ENCODE measurements at regions of chr12 and their contacts with region 1.

Region 1: GRCh38 chr12:53476769-53477209 is 22.5 kb downstream of the MAP3K12 start:
- DNase-seq: no peak
- H3K4me3 ChIP-seq: no peak overlapping the region
- H3K27ac ChIP-seq: no peak overlapping the region
- H3K27me3 ChIP-seq: no peaks in the 10 kb centered on the region
- CTCF ChIP-seq: peak; percentile 47

Region 2: GRCh38 chr12:53441040-53441833 is 35.6 kb before region 1 on chr12 and contains the start of gene PRR13:
- CTCF ChIA-PET with region 1: interaction called, 7 read pairs
- POLR2A ChIA-PET with region 1: interaction called, 11 read pairs
- DNase-seq: peak; percentile 98
- H3K4me3 ChIP-seq: peak within 1 kb of the TSS; percentile 80
- H3K27ac ChIP-seq: peak within 1 kb of the TSS; percentile 88
- H3K27me3 ChIP-seq: no peaks in the 10 kb centered on the region
- CTCF ChIP-seq: no peak
- polyA plus RNA-seq, gene PRR13: 71.4 and 92.8 TPM in 2 replicates

Region 3: GRCh38 chr12:53459097-53459496 is 17.7 kb before region 1 on chr12:
- CTCF ChIA-PET with region 1: interaction called, 5 read pairs
- POLR2A ChIA-PET with region 1: interaction called, 11 read pairs
- DNase-seq: no peak
- H3K4me3 ChIP-seq: no peak overlapping the region
- H3K27ac ChIP-seq: no peak overlapping the region
- H3K27me3 ChIP-seq: no peaks in the 10 kb centered on the region
- CTCF ChIP-seq: no peak

Region 4: GRCh38 chr12:53465679-53466078 is 11.1 kb before region 1 on chr12:
- CTCF ChIA-PET with region 1: interaction called, 5 read pairs
- POLR2A ChIA-PET with region 1: interaction called, 18 read pairs
- DNase-seq: no peak
- H3K4me3 ChIP-seq: no peak overlapping the region
- H3K27ac ChIP-seq: no peak overlapping the region
- H3K27me3 ChIP-seq: no peaks in the 10 kb centered on the region
- CTCF ChIP-seq: 0 out of 2 replicates have a peak, but pooled peaks have one; percentile 4

Region 5: GRCh38 chr12:53492830-53493611 is 16.2 kb after region 1 on chr12:
- CTCF ChIA-PET with region 1: interaction called, 4 read pairs
- POLR2A ChIA-PET with region 1: interaction called, 50 read pairs
- DNase-seq: no peak
- H3K4me3 ChIP-seq: peak overlapping the region; percentile 60
- H3K27ac ChIP-seq: peak overlapping the region; percentile 65
- H3K27me3 ChIP-seq: no peaks in the 10 kb centered on the region
- CTCF ChIP-seq: no peak

Region 6: GRCh38 chr12:53518381-53518780 is 41.6 kb after region 1 on chr12:
- CTCF ChIA-PET with region 1: no interaction called
- POLR2A ChIA-PET with region 1: no interaction called
- DNase-seq: no peak
- H3K4me3 ChIP-seq: no peak overlapping the region
- H3K27ac ChIP-seq: no peak overlapping the region
- H3K27me3 ChIP-seq: no peaks in the 10 kb centered on the region
- CTCF ChIP-seq: no peak

Measured in AG04450 (cell line).